Right ventricle myocardium inferior (tissue), 1 donor: ENCODE measurements at regions of chr14 and their contacts with region 1.

Region 1: DNA sequence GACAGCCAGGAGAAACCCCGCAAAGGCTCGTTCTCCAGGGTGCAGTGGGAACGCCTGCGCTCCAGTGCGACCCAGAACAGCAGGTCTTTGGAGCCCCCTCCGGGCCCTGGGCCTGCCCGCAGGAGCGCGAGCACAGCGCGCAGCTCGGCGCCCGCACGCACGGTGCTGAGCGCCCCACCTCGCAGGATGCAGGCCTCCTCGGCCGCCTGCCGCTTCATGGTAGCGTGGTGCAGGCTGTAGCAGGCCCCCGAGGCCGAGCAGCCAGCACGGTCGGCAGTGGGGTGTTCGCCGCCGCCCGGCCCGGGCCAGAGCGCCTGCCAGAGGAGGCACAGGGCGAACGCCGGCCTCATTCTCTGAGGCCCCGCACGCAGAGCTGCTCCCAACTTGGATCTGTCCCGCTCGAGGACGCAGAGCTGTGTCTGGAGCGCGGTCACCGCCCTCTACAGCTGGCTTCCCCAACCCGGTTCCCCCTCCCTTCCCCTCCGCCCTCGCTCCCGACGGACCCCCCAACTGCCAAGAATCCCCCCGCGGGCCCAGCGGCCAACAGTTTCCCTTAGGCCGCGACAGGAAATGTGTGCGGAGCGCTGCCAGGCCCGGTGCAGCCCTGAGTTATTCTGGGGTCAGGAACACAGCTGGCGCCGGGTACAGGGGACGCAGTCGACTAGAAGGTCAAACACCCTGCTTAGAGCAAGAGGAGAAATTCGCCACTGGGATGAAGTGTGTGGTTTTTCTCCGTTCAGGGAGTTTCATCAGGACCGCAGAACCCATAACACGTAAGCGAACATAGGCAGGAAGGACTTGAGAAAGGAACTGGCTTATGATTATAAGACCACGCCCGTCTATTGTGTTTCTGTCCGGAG is at the start of gene CLEC14A:
- DNase-seq: peak; percentile 87
- ATAC-seq: peak; percentile 90
- total RNA-seq, gene CLEC14A: 32.0 TPM

Region 2: DNA sequence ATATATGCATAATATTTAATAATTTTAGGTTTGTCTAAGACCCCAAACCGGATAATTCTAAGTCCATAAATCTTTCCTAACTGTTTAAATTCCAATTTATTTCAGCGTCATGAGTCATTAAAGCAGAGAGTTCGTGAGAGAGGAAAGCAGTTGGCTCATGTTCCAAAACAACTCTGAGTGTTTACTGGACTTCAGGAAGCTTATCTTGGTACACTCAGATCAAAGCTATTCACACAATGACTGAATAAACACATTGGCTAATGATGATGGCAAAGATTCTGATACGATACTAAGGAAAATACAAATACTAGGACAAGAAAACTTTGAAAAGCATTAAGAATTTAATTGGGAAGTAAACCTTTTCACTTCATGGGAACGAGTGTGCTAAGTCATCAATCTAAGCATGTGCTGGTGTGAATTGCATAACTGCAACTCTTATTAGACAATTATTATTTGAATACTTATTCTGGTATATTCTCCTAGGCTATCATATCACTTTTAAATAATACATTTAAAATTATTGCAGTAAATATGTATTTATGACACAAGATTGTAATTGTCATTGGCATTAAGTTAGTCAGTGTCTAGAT is 34.8 kb after region 1 on chr14:
- intact Hi-C with region 1: loop called (anchors 1 kb)
- DNase-seq: no peak
- ATAC-seq: peak; percentile 44

Region 3: GRCh38 chr14:38309522-38310277 is 53.8 kb after region 1 on chr14:
- intact Hi-C with region 1: loop called (anchors 5 kb)
- DNase-seq: no peak
- ATAC-seq: no peak

Region 4: GRCh38 chr14:38366374-38366773 is 110.5 kb after region 1 on chr14:
- intact Hi-C with region 1: loop called (anchors 5 kb)
- DNase-seq: no peak
- ATAC-seq: no peak